ENCODE measurements at regions of chr15 and their contacts with region 1.

Region 1: GRCh38 chr15:40115670-40116093 is 7.0 kb upstream of the BMF start:
- DNase-seq: peak in 3 of 5 donors; percentile 42 to 71 (median 45)
- ATAC-seq: peak; percentile 25 to 68 (median 44)
- H3K4me3 ChIP-seq: no peak overlapping the region
- H3K27ac ChIP-seq: no peak overlapping the region
- H3K4me1 ChIP-seq: peaks cover 0 to 9% (median 0%) of the 10 kb centered on the region in 12 donors
- H3K27me3 ChIP-seq: peaks cover 0 to 4% (median 0%) of the 10 kb centered on the region in 9 donors
- CTCF ChIP-seq: no peak
- POLR2A ChIP-seq: no peak

Region 2: DNA sequence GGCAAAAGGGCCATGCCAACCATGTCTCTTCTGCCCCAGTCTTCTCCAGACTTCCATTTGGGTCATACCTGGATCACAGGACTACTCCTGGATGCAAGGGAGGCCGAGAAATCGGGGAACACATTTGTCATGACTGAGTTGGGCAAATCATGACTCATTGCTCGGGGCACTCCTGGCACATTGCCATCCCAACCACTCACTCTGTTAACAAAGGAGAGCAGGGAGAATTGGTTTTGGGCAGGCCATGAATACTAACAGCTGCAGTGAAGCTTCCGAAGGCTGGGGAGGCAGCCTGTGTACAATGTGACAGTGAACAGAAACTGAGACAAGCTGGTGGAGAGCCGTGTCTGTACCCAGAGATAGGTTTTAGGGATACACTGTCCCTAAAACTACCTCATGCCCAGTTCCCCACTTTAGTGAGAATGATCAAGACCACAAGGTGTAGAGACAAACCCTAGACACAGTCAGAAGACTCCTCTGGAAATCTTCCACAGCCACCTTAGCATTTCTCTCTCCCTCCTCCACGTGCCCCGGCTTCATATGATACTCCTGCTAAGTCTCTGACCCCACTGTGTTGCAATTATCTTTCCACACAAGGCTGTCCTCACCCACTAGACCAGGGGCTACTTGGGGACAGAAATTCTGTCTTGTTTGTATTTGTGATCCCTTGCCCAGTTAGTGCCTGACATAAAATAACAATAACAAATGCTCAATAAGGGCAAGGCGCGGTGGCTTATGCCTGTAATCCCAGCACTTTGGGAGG is 34.7 kb after region 1 on chr15:
- intact Hi-C with region 1: loop called in 2 of 10 experiments (anchors 5 kb)
- DNase-seq: peak in 1 of 5 donors; percentile 29
- ATAC-seq: no peak
- H3K4me3 ChIP-seq: no peak overlapping the region
- H3K27ac ChIP-seq: no peak overlapping the region
- H3K4me1 ChIP-seq: no peaks in the 10 kb centered on the region
- H3K27me3 ChIP-seq: no peaks in the 10 kb centered on the region
- CTCF ChIP-seq: no peak
- POLR2A ChIP-seq: no peak

Region 3: DNA sequence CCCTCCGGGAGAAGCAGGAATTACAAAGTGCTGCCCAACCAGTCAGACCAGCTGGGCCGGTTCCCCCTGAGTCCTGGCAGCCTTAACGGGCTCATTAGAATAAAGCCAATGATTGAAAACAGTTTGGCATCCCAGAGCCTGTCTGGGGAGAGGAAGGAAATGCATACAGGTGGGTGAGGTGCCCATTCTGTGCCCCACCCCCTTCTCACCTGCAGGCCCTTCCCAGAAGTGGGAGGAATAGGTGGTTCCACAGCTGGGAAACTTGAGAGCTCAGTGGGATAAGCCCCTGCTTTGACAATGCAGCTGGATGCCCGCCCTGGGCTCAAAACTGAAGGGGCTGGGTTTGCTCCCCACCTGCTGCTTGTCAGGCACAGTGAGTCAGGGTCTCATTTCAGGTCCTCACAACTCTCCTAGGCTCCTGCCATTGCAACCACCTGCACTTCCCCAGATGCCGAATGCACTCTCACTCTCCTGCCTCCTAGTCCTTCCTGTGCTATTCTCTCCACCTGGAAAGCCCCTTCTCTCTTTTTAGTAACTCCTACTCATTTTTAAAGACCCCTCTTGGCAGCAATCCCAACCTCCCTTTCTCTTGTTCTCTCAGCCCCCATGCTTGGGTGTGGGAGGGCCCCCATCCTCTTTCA is 39.7 kb after region 1 on chr15:
- intact Hi-C with region 1: loop called in 2 of 10 experiments (anchors 5 kb)
- DNase-seq: no peak
- ATAC-seq: peak in 1 of 4 donors; percentile 25
- H3K4me3 ChIP-seq: no peak overlapping the region
- H3K27ac ChIP-seq: no peak overlapping the region
- H3K4me1 ChIP-seq: peaks cover 0 to 2% (median under 1%) of the 10 kb centered on the region in 12 donors
- H3K27me3 ChIP-seq: no peaks in the 10 kb centered on the region
- CTCF ChIP-seq: no peak
- POLR2A ChIP-seq: no peak

Measured in heart left ventricle (tissue), 16 donors.